HEK293 (cell line): ENCODE measurements at regions of chr5 and their contacts with region 1.

Region 1: GRCh38 chr5:138352071-138352721 is at the start of gene KDM3B:
- H3K4me3 ChIP-seq: peak within 1 kb of the TSS; percentile 83
- H3K27ac ChIP-seq: peak within 1 kb of the TSS; percentile 92
- H3K4me1 ChIP-seq: peaks cover 18% of the 10 kb centered on the region
- CTCF ChIP-seq: peak; percentile 98

Region 2: DNA sequence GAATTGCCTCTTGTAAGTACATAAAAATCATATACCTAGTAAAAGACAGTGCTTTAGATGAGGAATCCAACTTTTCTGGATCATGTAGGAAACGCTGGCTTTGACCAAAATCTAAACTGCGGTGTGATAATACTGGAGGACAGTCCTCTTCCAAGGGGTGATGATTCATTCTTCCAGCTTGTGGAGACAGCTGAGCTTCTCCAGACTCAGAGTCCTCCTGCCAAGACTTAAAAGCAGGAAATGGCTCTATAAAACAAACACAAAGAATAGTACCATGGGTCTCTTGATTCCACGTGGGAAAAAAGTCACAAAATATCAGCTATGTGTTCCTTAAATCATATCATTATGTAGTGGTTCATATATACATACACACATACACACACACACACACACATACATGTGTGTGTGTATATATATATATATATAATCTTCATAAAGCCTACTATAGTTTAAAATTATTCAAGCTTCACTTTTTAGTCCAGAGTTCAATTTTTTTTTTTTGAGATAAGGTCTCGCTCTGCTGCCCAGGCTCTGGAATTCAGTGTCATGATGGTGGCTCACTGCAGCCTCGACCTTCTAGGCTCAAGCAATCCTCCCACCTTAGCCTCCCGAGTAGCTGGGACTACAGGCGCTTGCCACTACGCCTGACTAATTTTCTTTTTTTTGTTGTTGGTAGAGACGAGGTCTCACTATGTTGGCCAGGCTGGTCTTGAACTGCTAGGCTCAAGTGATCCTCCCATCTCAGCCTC is 397.9 kb before region 1 on chr5:
- CTCF ChIA-PET with region 1: no interaction called
- POLR2A ChIA-PET with region 1: no interaction called
- H3K4me3 ChIP-seq: no peak overlapping the region
- H3K27ac ChIP-seq: no peak overlapping the region
- H3K4me1 ChIP-seq: no peaks in the 10 kb centered on the region
- CTCF ChIP-seq: no peak

Region 3: GRCh38 chr5:138223532-138223931 is 128.7 kb before region 1 on chr5:
- CTCF ChIA-PET with region 1: interaction called, 38 read pairs
- POLR2A ChIA-PET with region 1: no interaction called
- H3K4me3 ChIP-seq: no peak overlapping the region
- H3K27ac ChIP-seq: no peak overlapping the region
- H3K4me1 ChIP-seq: no peaks in the 10 kb centered on the region
- CTCF ChIP-seq: no peak

Region 4: GRCh38 chr5:138364576-138364975 is 12.4 kb after region 1 on chr5:
- CTCF ChIA-PET with region 1: interaction called, 94 read pairs
- POLR2A ChIA-PET with region 1: interaction called, 5 read pairs
- H3K4me3 ChIP-seq: no peak overlapping the region
- H3K27ac ChIP-seq: no peak overlapping the region
- H3K4me1 ChIP-seq: peaks cover 25% of the 10 kb centered on the region
- CTCF ChIP-seq: no peak

Region 5: GRCh38 chr5:138408023-138408422 is 55.8 kb after region 1 on chr5:
- CTCF ChIA-PET with region 1: interaction called, 18 read pairs
- POLR2A ChIA-PET with region 1: no interaction called
- H3K4me3 ChIP-seq: no peak overlapping the region
- H3K27ac ChIP-seq: no peak overlapping the region
- H3K4me1 ChIP-seq: no peaks in the 10 kb centered on the region
- CTCF ChIP-seq: no peak

Region 6: DNA sequence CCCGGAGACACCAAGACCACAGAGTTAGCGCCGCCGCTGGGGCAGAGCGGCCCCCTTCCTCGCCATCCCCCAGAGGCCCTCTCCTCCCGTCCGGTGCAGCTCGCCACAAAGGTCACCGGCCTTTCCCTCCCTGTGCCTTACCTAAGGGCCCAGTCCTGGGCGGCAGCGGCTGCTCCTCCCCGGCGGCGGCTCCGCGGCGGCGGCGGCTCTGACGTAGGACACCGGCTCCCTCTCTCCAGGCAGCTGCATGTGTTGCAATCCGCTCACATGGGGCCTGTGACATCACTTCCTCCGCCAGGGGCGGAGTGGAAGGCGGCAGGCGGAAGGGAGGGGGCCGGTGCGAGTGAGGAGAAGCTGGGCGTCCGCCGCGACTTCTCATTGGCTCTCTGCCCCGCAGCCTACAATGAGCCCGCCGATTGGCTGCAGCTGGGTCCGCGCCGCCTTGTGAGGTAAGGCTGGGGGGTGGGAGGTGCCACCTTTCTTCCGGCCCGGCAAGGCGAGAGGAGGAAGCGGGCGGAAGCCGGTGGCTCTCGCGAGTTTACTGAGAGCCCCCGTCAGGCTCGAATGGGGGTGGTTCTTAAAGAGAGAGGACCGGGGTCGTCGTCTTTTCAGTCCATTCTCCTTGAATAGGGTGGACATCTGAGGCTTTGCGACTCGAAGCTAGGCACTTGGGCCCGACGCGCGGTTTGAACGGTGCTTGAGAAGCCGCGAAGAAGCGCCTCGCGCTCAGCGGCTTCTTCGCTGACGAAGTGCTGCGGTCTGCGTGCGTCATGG is 190.9 kb after region 1 on chr5 and contains the start of gene ETF1:
- CTCF ChIA-PET with region 1: interaction called, 6 read pairs
- POLR2A ChIA-PET with region 1: interaction called, 12 read pairs
- H3K4me3 ChIP-seq: peak within 1 kb of the TSS; percentile 100
- H3K27ac ChIP-seq: peak within 1 kb of the TSS; percentile 77
- H3K4me1 ChIP-seq: peaks cover 11% of the 10 kb centered on the region
- CTCF ChIP-seq: no peak